ENCODE measurements at regions of chr16 and their contacts with region 1.

Region 1: GRCh38 chr16:20359997-20360396 is 7.5 kb upstream of the UMOD start:
- DNase-seq: no peak
- ATAC-seq: no peak
- H3K4me3 ChIP-seq: no peak overlapping the region
- H3K27ac ChIP-seq: no peak overlapping the region
- H3K4me1 ChIP-seq: no peaks in the 10 kb centered on the region
- H3K27me3 ChIP-seq: no peaks in the 10 kb centered on the region; a peak in 1 of 4 replicates
- CTCF ChIP-seq: peak in 2 of 3 experiments; percentile 18 to 28; a peak in 2 of 6 replicates
- EP300 ChIP-seq: no peak
- POLR2A ChIP-seq: no peak
- RAD21 ChIP-seq: no peak

Region 2: DNA sequence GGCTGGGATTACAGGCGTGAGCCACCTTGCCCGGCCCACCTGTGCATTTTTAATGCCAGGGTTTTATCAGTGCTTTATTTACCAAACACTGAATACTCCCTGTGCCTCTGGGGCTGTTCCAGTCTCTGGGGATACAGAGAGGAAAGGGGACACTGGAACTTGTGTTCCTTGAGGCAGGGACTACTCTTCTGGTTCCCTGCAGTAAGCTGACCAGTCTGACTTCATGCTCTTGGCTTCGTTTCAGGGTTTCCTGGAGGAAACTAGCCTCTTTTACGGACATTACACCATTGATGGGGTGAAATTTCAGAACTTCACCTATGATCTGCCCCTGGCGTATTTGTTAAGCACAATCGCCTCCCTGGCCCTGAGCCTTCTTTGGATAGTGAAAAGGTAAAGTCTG is 1330.0 kb before region 1 on chr16:
- CTCF ChIA-PET with region 1: no interaction called
- POLR2A ChIA-PET with region 1: no interaction called
- RAD21 ChIA-PET with region 1: no interaction called
- SMC1A ChIA-PET with region 1: no interaction called
- in situ Hi-C with region 1: loop called (anchors 25 kb)
- intact Hi-C with region 1: no loop called
- DNase-seq: no peak
- ATAC-seq: no peak
- H3K4me3 ChIP-seq: no peak overlapping the region
- H3K27ac ChIP-seq: no peak overlapping the region
- H3K4me1 ChIP-seq: no peaks in the 10 kb centered on the region
- H3K27me3 ChIP-seq: no peaks in the 10 kb centered on the region
- CTCF ChIP-seq: no peak
- EP300 ChIP-seq: no peak
- POLR2A ChIP-seq: no peak
- RAD21 ChIP-seq: no peak